CD8-positive, alpha-beta memory T cell (primary cell): ENCODE measurements at regions of chr16 and their contacts with region 1.

Region 1: DNA sequence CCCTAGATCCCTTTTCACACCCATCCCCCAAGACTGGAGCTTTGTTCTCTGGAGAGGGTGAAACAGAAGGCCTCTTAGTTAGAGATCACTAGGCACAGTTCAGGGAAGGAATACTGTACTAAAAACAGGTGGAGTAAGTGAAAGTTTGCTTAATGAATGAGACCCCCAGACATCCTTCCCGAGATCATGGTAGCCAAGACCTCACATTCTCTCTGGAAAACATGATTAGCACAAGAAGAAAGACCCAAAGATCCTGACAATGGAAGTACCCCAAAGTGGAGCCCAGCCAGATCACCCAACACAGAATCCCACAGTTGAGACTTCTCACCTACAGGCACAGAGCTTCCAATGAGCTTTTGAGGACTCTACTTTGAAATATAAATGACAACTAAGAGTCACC is 3.4 kb upstream of the CMTM4 start:
- DNase-seq: no peak
- H3K4me3 ChIP-seq: no peak overlapping the region
- H3K4me3 Mint-ChIP-seq: peak overlapping the region in 1 of 7 donors; percentile 45
- H3K27ac ChIP-seq: no peak overlapping the region
- H3K27ac Mint-ChIP-seq: no peak overlapping the region
- H3K4me1 ChIP-seq: peaks cover 13% of the 10 kb centered on the region
- H3K4me1 Mint-ChIP-seq: peaks cover 5 to 17% (median 14%) of the 10 kb centered on the region in 3 donors
- H3K27me3 ChIP-seq: no peaks in the 10 kb centered on the region
- H3K27me3 Mint-ChIP-seq: peaks cover 11% of the 10 kb centered on the region in 2 donors

Region 2: GRCh38 chr16:66673691-66674090 is 26.2 kb before region 1 on chr16:
- CTCF ChIA-PET with region 1: no interaction called
- POLR2A ChIA-PET with region 1: no interaction called
- DNase-seq: no peak
- H3K4me3 ChIP-seq: no peak overlapping the region
- H3K4me3 Mint-ChIP-seq: no peak overlapping the region
- H3K27ac ChIP-seq: no peak overlapping the region
- H3K27ac Mint-ChIP-seq: no peak overlapping the region
- H3K4me1 ChIP-seq: no peaks in the 10 kb centered on the region
- H3K4me1 Mint-ChIP-seq: no peaks in the 10 kb centered on the region
- H3K27me3 ChIP-seq: no peaks in the 10 kb centered on the region
- H3K27me3 Mint-ChIP-seq: no peaks in the 10 kb centered on the region

Region 3: DNA sequence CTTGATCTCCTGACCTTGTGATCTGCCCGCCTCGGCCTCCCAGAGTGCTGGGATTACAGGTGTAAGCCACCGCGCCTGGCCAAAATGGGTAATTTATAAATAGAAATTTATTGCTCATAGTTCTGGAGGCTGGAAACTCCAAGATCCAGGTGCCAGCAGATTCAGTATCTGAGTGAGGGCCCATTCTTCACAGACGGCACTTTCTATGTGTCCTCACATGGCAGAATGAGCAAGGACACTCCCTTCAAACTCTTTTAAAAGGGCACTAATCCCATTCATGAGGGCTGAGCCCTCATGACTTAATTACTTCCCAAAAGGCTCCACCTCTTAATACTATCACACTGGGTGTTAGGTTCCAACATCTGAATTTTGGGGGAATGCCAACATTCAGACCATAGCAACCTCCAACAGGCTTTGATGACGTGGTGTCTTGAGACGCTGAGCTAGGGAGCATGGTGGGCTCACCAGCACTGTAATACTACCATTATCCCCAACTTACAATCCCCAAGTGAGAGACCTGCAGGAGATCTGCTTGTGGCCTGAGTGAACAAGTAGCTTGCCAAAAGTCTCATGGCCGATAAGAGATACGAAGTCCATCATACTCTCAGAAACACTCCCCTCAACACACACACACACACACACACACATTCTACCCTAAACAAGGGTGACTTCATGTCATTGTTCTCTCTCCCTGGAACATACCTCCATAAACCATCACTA is 11.8 kb before region 1 on chr16:
- CTCF ChIA-PET with region 1: no interaction called
- POLR2A ChIA-PET with region 1: no interaction called
- DNase-seq: no peak
- H3K4me3 ChIP-seq: no peak overlapping the region
- H3K4me3 Mint-ChIP-seq: no peak overlapping the region
- H3K27ac ChIP-seq: no peak overlapping the region
- H3K27ac Mint-ChIP-seq: no peak overlapping the region
- H3K4me1 ChIP-seq: no peaks in the 10 kb centered on the region
- H3K4me1 Mint-ChIP-seq: no peaks in the 10 kb centered on the region
- H3K27me3 ChIP-seq: no peaks in the 10 kb centered on the region
- H3K27me3 Mint-ChIP-seq: peaks cover 1 to 10% of the 10 kb centered on the region in 2 donors

Region 4: GRCh38 chr16:66850115-66850815 is 150.4 kb after region 1 on chr16:
- CTCF ChIA-PET with region 1: no interaction called
- POLR2A ChIA-PET with region 1: interaction called, 11 read pairs
- DNase-seq: no peak
- H3K4me3 ChIP-seq: no peak overlapping the region
- H3K4me3 Mint-ChIP-seq: no peak overlapping the region
- H3K27ac ChIP-seq: no peak overlapping the region
- H3K27ac Mint-ChIP-seq: no peak overlapping the region
- H3K4me1 ChIP-seq: no peaks in the 10 kb centered on the region
- H3K4me1 Mint-ChIP-seq: peaks cover 0 to 4% (median 0%) of the 10 kb centered on the region in 3 donors
- H3K27me3 ChIP-seq: peaks cover 9% of the 10 kb centered on the region
- H3K27me3 Mint-ChIP-seq: peaks cover 16% of the 10 kb centered on the region in 2 donors